Esophagus muscularis mucosa (tissue), 4 donors: ENCODE measurements at regions of chr22 and their contacts with region 1.

Region 1: GRCh38 chr22:24106385-24107381 is 74.6 kb upstream of the SUSD2 start:
- DNase-seq: no peak
- H3K4me3 ChIP-seq: no peak overlapping the region
- H3K27ac ChIP-seq: peak overlapping the region; percentile 60 to 75 (median 70)
- H3K4me1 ChIP-seq: peaks cover 19 to 45% (median 39%) of the 10 kb centered on the region in 4 donors
- H3K27me3 ChIP-seq: no peaks in the 10 kb centered on the region
- CTCF ChIP-seq: peak; percentile 27 to 34 (median 34)
- EP300 ChIP-seq: no peak
- POLR2A ChIP-seq: no peak

Region 2: DNA sequence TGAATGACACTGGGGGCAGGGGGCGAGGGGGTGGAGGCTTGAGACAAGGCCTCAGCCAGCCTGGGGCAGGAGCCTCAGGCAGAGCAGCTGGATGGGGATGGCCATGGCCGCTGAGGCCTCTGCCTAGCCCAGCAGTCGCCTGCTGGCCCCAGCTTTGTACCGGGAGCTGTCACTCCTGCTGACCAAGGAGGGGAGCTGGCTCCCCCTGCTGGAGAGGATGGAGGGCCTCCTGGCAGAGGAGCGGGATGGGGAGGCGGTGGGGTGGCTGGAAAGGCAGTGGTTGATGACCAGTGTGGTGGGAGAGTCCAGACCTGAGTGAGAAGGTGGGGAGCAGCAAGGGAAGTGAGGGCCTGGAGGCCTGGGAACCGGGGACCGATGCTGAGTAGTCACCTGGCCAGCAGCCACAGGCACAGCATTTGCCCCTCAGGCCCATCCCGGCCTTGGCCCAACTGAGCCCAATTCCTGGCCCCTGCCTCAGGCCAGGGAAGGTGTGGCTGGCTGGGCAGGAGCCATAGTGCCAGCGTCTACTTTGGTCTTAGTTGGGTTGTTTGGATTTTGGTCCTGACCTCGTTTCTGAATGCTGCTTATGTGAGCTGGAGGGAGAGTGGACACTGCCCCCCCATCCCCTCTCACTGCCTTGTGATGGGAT is 68.6 kb after region 1 on chr22:
- intact Hi-C with region 1: loop called (anchors 1 kb)
- DNase-seq: peak; percentile 94
- H3K4me3 ChIP-seq: no peak overlapping the region
- H3K27ac ChIP-seq: peak overlapping the region; percentile 83 to 88 (median 85)
- H3K4me1 ChIP-seq: peaks cover 32 to 64% (median 57%) of the 10 kb centered on the region in 4 donors
- H3K27me3 ChIP-seq: no peaks in the 10 kb centered on the region
- CTCF ChIP-seq: peak; percentile 88 to 92 (median 90)
- EP300 ChIP-seq: no peak
- POLR2A ChIP-seq: no peak

Region 3: DNA sequence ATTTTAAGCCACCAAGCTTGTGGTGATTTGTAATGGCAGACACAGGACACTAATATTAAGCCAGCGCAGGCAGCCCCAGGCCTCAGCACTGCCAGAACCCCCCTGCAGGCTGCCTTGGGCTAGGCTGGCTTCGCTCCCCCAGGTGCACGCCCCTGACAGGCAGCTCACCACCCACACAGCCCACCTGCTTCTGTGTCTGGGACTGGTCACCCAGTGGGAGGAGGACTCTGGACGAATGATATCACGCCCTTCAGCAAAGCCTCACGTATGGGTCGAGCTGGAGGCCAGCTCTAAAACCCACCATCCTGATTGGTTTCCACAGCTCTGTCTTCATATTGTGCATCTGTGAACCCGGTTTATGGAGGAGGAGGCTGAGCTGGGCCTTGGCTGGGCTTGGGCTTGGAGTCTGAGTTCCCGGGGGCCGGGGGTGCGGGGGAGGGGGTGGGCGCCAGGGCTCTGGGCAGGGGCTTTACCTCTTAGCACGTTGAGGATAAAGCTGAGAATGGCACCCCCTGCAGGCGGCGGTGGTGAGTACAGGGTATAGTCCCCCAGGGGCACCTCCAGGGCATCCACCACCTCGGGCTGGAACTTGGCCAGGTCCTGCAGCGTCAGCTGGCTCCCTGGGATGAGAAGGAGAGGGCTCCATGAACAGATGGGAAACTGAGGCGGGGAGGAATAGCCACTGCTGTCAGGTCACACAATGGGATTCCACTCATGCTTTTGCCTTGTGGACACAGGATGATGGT is 124.4 kb after region 1 on chr22:
- intact Hi-C with region 1: loop called (anchors 10 kb)
- DNase-seq: no peak
- H3K4me3 ChIP-seq: no peak overlapping the region
- H3K27ac ChIP-seq: no peak overlapping the region
- H3K4me1 ChIP-seq: no peaks in the 10 kb centered on the region
- H3K27me3 ChIP-seq: no peaks in the 10 kb centered on the region
- CTCF ChIP-seq: peak; percentile 8 to 33 (median 22)
- EP300 ChIP-seq: no peak
- POLR2A ChIP-seq: no peak